Left colon (tissue), 2 donors: ENCODE measurements at regions of chr17 and their contacts with region 1.

Region 1: GRCh38 chr17:15502369-15503112 is 35.1 kb upstream of the CDRT4 start:
- DNase-seq: peak; percentile 79 to 85
- ATAC-seq: peak; percentile 89

Region 2: GRCh38 chr17:15213381-15214087 is 289.0 kb before region 1 on chr17:
- intact Hi-C with region 1: no loop called
- DNase-seq: no peak
- ATAC-seq: no peak

Region 3: DNA sequence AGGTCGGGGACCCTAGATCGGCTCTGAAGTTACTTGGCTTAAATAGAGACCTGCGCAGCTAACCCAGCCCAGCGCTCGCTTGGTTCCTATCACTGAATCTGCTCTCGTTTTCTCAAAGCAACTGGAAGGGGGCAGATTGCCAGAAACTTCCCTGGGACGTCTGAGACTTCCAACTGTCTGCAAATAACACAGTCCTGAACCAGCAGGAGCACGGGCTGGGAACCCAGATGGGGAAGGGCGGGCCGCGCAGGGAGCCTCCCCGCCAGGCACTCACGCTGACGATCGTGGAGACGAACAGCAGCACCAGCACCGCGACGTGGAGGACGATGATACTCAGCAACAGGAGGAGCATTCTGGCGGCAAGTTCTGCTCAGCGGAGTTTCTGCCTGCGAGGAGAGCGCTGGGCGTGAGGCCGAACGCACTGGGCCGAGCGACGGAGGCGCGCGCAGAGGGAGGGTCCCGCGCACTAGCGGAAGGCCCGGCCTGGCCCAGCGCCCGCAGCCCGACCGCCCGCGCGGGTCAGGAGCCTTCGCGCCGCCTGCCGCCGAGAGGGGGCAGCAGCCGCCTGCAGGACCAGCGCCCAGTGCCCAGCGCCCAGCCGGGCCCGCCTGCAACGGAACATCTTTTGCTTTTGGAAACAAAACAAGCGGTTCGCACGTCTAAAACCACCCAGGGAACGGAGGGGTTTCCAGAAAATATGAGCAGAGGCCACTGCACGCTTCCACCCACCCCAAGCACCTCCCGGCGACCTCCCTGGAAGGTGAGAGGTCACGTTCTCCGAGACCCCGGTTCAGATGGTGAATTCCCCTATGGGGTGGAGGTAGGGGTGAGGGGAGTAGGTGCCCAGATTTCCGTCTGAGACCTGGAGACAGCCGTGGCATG is 241.9 kb before region 1 on chr17:
- intact Hi-C with region 1: loop called in 1 of 2 experiments (anchors 2 kb)
- DNase-seq: peak; percentile 77 to 86
- ATAC-seq: peak; percentile 66

Region 4: GRCh38 chr17:15436473-15437302 is 65.9 kb before region 1 on chr17:
- intact Hi-C with region 1: no loop called
- DNase-seq: peak; percentile 71 to 72
- ATAC-seq: peak; percentile 73